Activated naive CD4-positive, alpha-beta T cell treated with anti-CD3 and anti-CD28 coated beads for 36 hours (primary cell): ENCODE measurements at regions of chr9 and their contacts with region 1.

Region 1: DNA sequence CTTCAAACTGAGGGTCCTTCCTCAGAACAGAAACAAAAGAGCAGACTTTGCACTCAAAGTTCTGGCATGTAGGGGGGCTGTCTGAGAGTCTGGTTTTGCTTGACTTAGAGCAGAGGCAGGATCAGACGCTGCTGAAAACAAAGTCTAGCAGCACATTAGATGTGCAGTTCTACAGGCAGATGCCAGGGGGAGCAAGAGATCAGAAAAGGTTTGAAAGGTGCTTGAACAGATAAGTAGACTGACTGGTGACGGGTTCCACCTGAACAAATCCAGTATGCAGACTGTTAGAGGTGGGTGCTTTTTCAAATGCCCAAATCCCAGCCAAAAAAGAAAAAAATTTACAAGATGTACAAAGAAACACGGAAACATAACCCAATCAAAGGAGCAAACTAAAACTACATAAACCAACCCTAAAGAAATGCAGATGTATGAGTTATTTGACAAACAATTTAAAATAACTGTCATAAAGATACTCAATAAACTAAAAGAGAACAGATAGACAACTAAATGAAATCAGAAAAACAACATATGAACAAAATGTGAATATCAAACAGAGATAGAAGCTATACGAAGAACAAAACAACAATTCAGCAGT is 194.7 kb upstream of the FREM1 start:
- DNase-seq: peak; percentile 60
- H3K4me3 Mint-ChIP-seq: no peak overlapping the region
- H3K27ac Mint-ChIP-seq: no peak overlapping the region
- H3K4me1 Mint-ChIP-seq: no peaks in the 10 kb centered on the region
- H3K27me3 Mint-ChIP-seq: peaks cover 2% of the 10 kb centered on the region

Region 2: GRCh38 chr9:15135164-15135792 is 30.4 kb after region 1 on chr9:
- CTCF ChIA-PET with region 1: interaction called, 64 read pairs
- intact Hi-C with region 1: loop called (anchors 1 kb)
- DNase-seq: peak; percentile 58
- H3K4me3 Mint-ChIP-seq: no peak overlapping the region
- H3K27ac Mint-ChIP-seq: no peak overlapping the region
- H3K4me1 Mint-ChIP-seq: peaks cover 1% of the 10 kb centered on the region
- H3K27me3 Mint-ChIP-seq: no peaks in the 10 kb centered on the region

Region 3: GRCh38 chr9:15317836-15318235 is 212.9 kb after region 1 on chr9:
- CTCF ChIA-PET with region 1: no interaction called
- intact Hi-C with region 1: loop called (anchors 10 kb)
- DNase-seq: no peak
- H3K4me3 Mint-ChIP-seq: no peak overlapping the region
- H3K27ac Mint-ChIP-seq: no peak overlapping the region
- H3K4me1 Mint-ChIP-seq: peaks cover 7% of the 10 kb centered on the region
- H3K27me3 Mint-ChIP-seq: no peaks in the 10 kb centered on the region

Region 4: GRCh38 chr9:15389173-15389572 is 284.2 kb after region 1 on chr9:
- CTCF ChIA-PET with region 1: no interaction called
- intact Hi-C with region 1: no loop called
- DNase-seq: no peak
- H3K4me3 Mint-ChIP-seq: no peak overlapping the region
- H3K27ac Mint-ChIP-seq: no peak overlapping the region
- H3K4me1 Mint-ChIP-seq: no peaks in the 10 kb centered on the region
- H3K27me3 Mint-ChIP-seq: no peaks in the 10 kb centered on the region

Region 5: DNA sequence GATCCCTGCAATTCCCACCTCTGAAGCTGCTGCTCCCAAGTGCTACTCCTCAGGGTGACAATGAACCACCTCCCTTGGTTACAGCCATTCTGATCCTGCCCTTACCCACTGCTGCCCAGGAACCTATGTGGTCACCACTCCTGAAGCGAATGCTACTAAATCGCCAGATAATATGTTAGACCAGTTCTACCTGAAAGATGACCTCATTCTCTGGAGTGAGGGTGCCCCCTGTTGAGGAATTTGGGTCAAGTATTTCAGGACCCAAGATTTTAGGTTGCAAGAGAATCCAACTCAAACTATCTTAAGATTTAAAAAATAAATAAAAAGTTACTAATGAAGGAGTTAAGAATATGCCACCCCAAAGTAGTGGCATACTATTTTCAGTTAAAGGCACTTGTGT is 312.0 kb after region 1 on chr9:
- CTCF ChIA-PET with region 1: interaction called, 3 read pairs
- intact Hi-C with region 1: loop called (anchors 1 kb)
- DNase-seq: peak; percentile 67
- H3K4me3 Mint-ChIP-seq: no peak overlapping the region
- H3K27ac Mint-ChIP-seq: no peak overlapping the region
- H3K4me1 Mint-ChIP-seq: no peaks in the 10 kb centered on the region
- H3K27me3 Mint-ChIP-seq: no peaks in the 10 kb centered on the region

Region 6: GRCh38 chr9:15529566-15530324 is 424.8 kb after region 1 on chr9:
- CTCF ChIA-PET with region 1: no interaction called
- intact Hi-C with region 1: loop called (anchors 2 kb)
- DNase-seq: no peak
- H3K4me3 Mint-ChIP-seq: no peak overlapping the region
- H3K27ac Mint-ChIP-seq: no peak overlapping the region
- H3K4me1 Mint-ChIP-seq: peaks cover 11% of the 10 kb centered on the region
- H3K27me3 Mint-ChIP-seq: no peaks in the 10 kb centered on the region

Region 7: DNA sequence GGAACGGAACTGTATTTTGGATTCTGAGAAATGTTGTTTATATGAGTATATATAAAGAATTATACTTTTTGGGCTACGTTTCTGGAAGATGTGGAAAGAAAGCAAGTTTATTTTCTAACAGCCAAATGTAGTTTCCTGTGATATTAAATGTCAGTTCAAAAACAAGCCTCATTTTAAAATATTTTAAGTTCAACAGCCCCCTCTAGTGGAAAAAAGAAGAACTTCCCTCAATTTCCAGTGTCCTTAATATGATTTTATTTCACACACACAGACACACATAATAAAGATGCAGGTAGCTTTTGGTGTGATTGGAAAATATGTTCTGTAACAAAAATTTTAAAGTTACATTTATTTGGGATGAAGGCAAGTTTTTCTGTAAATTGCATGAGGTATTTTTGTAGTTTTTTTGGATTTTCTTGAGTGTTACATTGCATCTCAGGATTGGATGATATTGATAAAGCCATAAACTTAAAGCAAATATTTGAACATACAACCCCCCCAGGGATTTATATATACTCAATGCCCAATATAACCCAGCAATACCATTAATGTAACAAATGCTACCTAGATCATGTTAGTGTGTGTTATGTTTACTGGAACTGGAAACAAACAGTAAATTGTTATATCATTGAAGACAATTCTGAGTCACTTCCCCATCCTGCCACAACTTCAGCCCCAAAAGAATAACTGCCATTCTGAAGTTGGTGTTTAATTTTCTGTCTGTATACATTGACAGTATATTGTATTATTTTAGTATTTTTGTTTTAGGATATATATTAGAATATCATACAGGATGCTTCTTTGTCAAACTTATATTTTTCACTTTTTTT is 501.9 kb after region 1 on chr9:
- CTCF ChIA-PET with region 1: no interaction called
- intact Hi-C with region 1: loop called (anchors 2 kb)
- DNase-seq: no peak
- H3K4me3 Mint-ChIP-seq: no peak overlapping the region
- H3K27ac Mint-ChIP-seq: no peak overlapping the region
- H3K4me1 Mint-ChIP-seq: no peaks in the 10 kb centered on the region
- H3K27me3 Mint-ChIP-seq: no peaks in the 10 kb centered on the region